A549 (cell line): ENCODE measurements at regions of chr16 and their contacts with region 1.

Region 1: GRCh38 chr16:75244844-75245758 is 6.3 kb downstream of the BCAR1 start:
- DNase-seq: peak; percentile 67 to 80
- ATAC-seq: peak; percentile 80 to 81
- H3K4me3 ChIP-seq: no peak overlapping the region
- H3K27ac ChIP-seq: peak overlapping the region; percentile 82 to 99
- H3K4me1 ChIP-seq: peaks cover 70% of the 10 kb centered on the region
- CTCF ChIP-seq: no peak
- EP300 ChIP-seq: peak in 1 of 2 experiments; percentile 52; a peak in 1 of 5 replicates
- POLR2A ChIP-seq: 0 out of 2 replicates have a peak, but pooled peaks have one; percentile 10
- RAD21 ChIP-seq: 0 out of 5 replicates have a peak, but pooled peaks of 1 of the 2 experiments have one; percentile 17

Region 2: DNA sequence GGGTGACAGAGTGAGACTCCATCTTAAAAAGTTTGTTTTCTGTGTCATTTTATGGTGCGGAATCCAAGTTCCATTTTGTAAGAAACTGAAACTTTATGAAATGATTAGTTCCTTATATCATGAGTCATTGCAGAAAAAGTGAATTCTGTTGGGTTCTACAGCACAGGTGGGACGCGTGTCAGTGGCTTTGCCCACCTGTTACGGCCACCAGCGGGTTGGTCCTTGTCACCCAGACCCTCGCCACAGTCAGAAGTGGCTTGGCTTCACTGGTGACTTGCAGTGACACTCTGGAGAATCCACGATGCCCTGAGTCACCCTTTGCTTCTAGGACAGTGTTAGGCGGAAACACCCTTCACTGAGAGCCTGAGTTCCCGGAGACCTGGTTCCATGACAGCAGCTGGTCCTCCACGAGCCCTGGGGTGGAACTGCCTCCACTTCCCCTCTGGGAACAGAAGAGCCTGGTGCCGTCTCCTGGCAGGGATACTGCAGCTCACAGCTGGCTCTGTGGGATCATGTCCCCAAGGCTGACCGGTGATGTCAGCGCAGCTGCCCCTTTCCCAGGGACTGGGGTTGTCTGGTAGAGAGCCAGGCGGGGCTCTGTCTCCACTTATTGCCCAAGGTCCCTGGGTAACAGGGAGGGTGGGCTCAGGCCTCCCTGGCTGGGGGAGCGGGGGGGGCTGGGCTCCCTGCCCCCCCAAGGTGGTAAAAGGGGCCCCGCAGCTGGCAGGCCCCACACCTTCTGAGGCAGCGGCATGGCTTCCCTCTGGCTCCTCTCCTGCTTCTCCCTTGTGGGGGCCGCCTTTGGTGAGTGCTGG is 26.6 kb before region 1 on chr16 and contains the start of gene CTRB1:
- CTCF ChIA-PET with region 1: no interaction called
- POLR2A ChIA-PET with region 1: no interaction called
- DNase-seq: no peak
- ATAC-seq: peak in 1 of 2 experiments; percentile 44; a peak in 1 of 6 replicates
- H3K4me3 ChIP-seq: no peak within 1 kb of the TSS
- H3K27ac ChIP-seq: no peak within 1 kb of the TSS
- H3K4me1 ChIP-seq: no peaks in the 10 kb centered on the region
- CTCF ChIP-seq: no peak
- EP300 ChIP-seq: no peak
- POLR2A ChIP-seq: no peak
- RAD21 ChIP-seq: no peak
- polyA plus RNA-seq, gene CTRB1: not detected in 2 replicates

Region 3: GRCh38 chr16:75385507-75386152 is 140.5 kb after region 1 on chr16:
- CTCF ChIA-PET with region 1: interaction called, 14 read pairs
- POLR2A ChIA-PET with region 1: interaction called, 5 read pairs
- DNase-seq: peak; percentile 21 to 78
- ATAC-seq: peak in 1 of 2 experiments; percentile 55; a peak in 3 of 6 replicates
- H3K4me3 ChIP-seq: no peak overlapping the region
- H3K27ac ChIP-seq: peak overlapping the region; percentile 59 to 72; a peak in 3 of 6 replicates
- H3K4me1 ChIP-seq: peaks cover 7% of the 10 kb centered on the region; the same call in 2 of the 3 replicates
- CTCF ChIP-seq: peak; percentile 93
- EP300 ChIP-seq: no peak
- POLR2A ChIP-seq: no peak
- RAD21 ChIP-seq: peak; percentile 92 to 95